ENCODE measurements at regions of chr3 and their contacts with region 1.

Region 1: DNA sequence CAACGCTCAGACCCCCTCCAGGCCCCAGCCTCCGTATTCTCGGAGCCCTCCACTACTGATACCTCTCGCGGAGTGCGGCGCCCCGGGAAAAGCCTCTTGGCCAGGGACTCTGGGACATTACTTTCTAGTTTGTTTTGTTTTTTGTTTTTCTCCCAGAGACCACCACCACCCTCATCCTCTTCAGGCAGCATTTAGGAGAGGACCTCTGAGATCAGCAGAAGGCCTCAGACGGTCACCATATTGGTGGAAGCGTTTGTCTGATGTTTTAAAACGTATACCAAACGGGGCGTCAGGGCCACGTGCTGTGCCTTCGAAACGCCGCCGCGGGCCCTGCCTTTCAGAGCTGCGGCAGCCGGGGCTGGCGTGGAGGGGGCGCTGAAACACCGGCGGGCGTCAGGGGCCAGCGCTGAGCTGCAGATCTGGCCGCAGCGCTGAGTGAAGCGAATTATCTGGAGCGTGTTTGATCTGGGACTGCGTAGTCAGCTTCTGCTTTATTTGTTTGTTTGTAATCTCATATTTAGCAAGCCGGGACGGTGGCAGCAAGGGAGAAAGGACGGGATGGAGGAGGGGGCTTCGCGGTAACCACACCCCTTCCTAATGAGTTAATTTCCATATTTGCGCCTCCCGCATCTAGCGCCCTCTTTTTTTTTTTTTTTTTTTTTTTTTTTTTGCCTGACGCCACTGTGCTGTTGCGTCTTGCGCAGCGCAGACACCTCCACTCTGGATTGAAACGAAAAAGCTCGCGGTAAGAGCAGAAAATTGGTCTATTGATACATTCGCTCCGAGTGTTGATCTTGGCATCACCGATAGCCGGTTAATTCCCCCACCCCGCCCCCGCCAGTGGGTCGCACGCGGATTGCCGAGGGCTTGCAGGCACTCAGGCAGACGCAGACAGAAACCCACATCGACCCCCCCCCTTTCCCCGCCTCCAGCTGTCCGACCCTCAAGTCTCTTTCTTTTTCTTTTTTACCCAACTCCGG is 14.9 kb downstream of the SOX2 start:
- DNase-seq: no peak
- ATAC-seq: peak; percentile 60
- H3K4me3 ChIP-seq: peak overlapping the region; percentile 39 to 60
- H3K27ac ChIP-seq: no peak overlapping the region
- H3K4me1 ChIP-seq: no peaks in the 10 kb centered on the region
- H3K27me3 ChIP-seq: peaks cover 32% of the 10 kb centered on the region
- CTCF ChIP-seq: 0 out of 2 replicates have a peak, but pooled peaks have one; percentile 34

Region 2: DNA sequence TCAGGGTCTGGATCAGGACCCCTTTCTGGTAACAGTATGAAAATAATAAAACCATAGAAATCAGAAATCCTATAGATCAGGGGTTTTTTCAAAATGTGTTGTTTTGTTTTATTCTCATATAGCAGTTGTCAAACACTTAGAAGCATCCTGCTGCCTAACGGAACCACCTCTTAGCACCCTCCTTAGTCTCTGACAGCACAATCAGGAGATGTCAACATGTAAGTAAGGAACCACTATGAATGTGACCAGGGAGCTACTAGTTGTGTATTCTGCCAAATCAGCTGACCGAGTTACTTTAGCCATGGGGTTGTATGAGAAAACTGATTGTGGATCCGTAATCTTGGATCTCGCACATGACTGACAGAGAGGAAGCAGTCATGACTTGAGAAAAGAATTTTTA is 1069.5 kb before region 1 on chr3:
- CTCF ChIA-PET with region 1: no interaction called
- POLR2A ChIA-PET with region 1: interaction called, 12 read pairs
- in situ Hi-C with region 1: no loop called
- intact Hi-C with region 1: no loop called
- DNase-seq: no peak
- ATAC-seq: no peak
- H3K4me3 ChIP-seq: peak overlapping the region in 1 of 2 experiments; percentile 14; a peak in 1 of 4 replicates
- H3K27ac ChIP-seq: no peak overlapping the region
- H3K4me1 ChIP-seq: no peaks in the 10 kb centered on the region
- H3K27me3 ChIP-seq: no peaks in the 10 kb centered on the region
- CTCF ChIP-seq: no peak

Region 3: DNA sequence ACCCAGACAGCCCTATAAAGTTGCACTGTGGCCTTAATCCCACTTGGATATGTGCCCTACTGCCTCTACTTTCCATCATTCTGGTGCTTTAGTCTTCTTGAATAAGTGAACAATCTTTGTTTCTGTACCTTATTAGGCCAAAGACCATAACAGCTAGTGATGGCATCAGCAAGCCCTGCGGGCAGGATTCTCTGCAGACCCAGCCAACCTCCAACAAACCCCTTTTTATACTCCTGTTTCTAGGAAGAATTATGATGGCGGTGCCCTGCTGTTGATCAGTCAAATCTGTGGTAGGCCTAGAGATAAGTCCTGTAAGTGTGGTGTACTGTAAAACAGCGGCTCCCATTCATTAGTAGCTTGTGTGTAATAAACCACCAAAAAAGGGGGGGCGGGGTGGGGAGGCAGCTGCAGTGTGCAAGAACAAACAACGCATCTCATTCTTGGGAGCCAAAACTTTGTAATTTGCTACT is 25.6 kb after region 1 on chr3:
- CTCF ChIA-PET with region 1: no interaction called
- POLR2A ChIA-PET with region 1: no interaction called
- in situ Hi-C with region 1: no loop called
- intact Hi-C with region 1: no loop called
- DNase-seq: no peak
- ATAC-seq: no peak
- H3K4me3 ChIP-seq: no peak overlapping the region
- H3K27ac ChIP-seq: no peak overlapping the region
- H3K4me1 ChIP-seq: no peaks in the 10 kb centered on the region
- H3K27me3 ChIP-seq: peaks cover 11% of the 10 kb centered on the region; the same call in 1 of the 2 replicates
- CTCF ChIP-seq: no peak

Region 4: GRCh38 chr3:182671942-182672341 is 945.3 kb after region 1 on chr3:
- CTCF ChIA-PET with region 1: no interaction called
- POLR2A ChIA-PET with region 1: interaction called, 13 read pairs
- in situ Hi-C with region 1: no loop called
- intact Hi-C with region 1: no loop called
- DNase-seq: no peak
- ATAC-seq: no peak
- H3K4me3 ChIP-seq: no peak overlapping the region
- H3K27ac ChIP-seq: no peak overlapping the region
- H3K4me1 ChIP-seq: no peaks in the 10 kb centered on the region
- H3K27me3 ChIP-seq: peaks cover 3% of the 10 kb centered on the region; the same call in 1 of the 2 replicates
- CTCF ChIP-seq: no peak

Measured in Panc1 (cell line).